ENCODE measurements at regions of chr10 and their contacts with region 1.

Region 1: DNA sequence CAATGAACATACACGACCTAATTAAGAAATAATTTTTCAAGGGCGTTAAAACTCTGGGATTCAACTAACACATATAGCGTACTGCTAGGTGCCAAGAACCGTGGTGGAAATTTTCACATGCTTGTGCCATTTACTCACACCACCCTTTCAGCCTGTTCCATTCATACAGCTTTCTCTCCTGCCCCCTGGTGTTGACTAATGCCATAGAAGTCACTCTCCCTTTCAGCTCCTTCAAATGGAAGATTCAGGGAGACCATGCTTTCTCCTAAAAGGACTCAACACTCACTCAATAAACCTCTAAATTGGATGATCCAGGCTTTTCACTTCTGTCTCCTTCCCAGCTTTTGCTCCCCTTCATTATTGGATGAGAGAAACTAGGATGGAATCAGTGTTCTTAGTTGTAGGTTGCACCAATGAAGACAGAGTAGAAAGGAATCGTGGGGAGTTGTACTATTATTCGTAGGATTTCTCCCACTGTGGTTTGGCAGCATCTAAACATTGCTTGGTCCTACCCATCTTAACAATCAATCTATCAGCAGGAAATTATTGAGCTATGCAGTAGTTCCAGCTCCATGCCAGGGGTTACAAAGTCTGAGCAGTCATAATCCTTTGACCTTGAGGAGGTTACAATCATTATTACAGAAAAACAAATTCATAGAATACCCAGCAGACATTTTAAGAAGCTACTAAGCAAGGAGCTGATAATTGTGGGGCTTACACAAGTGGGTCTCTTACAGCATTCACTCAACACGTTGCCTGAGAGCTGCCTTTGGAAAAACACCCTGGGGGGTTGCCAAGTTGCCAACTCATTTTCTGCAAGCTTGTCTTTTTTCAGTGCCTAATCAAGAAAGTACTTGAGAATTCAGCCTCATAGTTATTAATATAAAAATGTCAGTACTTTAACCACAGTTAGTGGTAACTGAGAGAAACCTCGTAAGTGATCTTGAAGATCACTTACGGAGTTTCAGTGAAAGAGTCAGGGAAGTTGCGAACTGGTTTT is 2.8 kb upstream of the PPP1R3C start:
- DNase-seq: peak; percentile 59

Region 2: GRCh38 chr10:91298224-91298871 is 337.4 kb before region 1 on chr10:
- CTCF ChIA-PET with region 1: interaction called, 14 read pairs
- POLR2A ChIA-PET with region 1: interaction called, 3 read pairs
- DNase-seq: peak; percentile 82

Region 3: GRCh38 chr10:91520661-91521060 is 115.0 kb before region 1 on chr10:
- CTCF ChIA-PET with region 1: no interaction called
- POLR2A ChIA-PET with region 1: no interaction called
- DNase-seq: no peak

Region 4: GRCh38 chr10:91551856-91552255 is 83.8 kb before region 1 on chr10:
- CTCF ChIA-PET with region 1: interaction called, 24 read pairs
- POLR2A ChIA-PET with region 1: interaction called, 4 read pairs
- DNase-seq: peak; percentile 60